ENCODE measurements at regions of chr12 and their contacts with region 1.

Region 1: GRCh38 chr12:69639400-69640016 is 28.8 kb upstream of the LRRC10 start:
- DNase-seq: no peak
- H3K4me3 ChIP-seq: no peak overlapping the region
- H3K27me3 ChIP-seq: 0 out of 2 replicates have a peak, but pooled peaks cover 1% of the 10 kb centered on the region
- CTCF ChIP-seq: peak; percentile 95

Region 2: DNA sequence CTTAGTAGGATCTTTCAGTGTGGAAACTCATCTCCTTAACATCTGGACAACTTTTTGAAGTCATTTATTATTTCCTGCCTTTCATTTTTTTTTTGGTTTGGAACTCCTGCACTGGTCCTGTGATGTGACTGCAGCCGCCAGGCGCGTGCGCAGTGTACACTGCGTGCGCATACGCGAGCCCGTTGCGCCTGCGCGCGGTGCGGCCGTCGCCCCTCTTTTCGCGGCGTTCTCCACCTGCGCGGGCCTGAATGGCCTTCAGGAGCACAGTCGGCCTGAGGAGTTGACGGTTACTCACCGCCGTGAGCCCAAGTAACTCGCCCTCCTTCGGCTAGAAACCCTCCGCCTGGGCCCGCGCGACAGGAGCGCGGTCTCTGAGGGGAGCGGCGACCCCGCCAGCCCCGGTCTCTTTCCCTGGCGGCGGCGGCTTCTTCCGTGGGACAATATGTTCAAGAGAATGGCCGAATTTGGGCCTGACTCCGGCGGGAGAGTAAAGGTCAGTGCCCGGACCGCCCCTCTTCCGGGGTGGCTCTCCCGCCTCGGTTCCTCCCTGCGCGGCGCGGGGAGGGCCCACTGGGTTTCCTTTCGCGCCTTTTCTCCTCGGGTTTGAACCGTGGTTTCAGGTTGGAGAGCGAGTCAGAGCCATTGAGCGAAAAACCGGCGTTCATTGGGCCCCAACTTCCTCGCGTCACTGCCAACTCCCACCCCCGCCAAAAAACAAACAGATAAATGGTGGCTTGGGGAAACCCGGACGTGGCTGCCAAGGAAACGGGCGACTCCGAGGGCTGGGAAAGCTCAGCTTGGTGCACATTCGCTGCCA is 279.8 kb before region 1 on chr12 and contains the start of gene YEATS4:
- CTCF ChIA-PET with region 1: interaction called, 42 read pairs
- POLR2A ChIA-PET with region 1: no interaction called
- DNase-seq: peak; percentile 46
- H3K4me3 ChIP-seq: peak within 1 kb of the TSS; percentile 93
- H3K27me3 ChIP-seq: no peaks in the 10 kb centered on the region
- CTCF ChIP-seq: no peak
- polyA plus RNA-seq, gene YEATS4: 7.8 and 9.1 TPM in 2 replicates

Region 3: DNA sequence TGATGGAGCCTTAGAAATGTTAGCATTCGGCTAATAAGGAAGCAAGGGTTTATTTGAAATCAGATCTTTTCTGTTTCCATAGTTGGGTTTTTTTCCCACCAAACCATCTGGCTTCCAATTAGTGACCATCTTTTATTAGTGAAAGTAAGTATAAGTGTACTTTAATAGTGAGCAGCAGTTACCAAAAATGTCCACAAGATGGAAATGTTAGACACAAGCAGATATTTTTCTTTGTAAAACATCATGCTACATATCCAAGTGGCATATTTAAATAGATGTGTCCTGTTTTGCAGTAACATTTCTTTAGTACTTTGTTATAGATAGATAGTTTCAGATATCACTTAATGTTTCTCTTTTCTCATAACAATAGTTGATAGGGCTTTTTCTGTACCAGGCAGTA is 251.1 kb before region 1 on chr12:
- CTCF ChIA-PET with region 1: interaction called, 27 read pairs
- POLR2A ChIA-PET with region 1: no interaction called
- DNase-seq: peak; percentile 34
- H3K4me3 ChIP-seq: no peak overlapping the region
- H3K27me3 ChIP-seq: no peaks in the 10 kb centered on the region
- CTCF ChIP-seq: peak; percentile 68

Region 4: DNA sequence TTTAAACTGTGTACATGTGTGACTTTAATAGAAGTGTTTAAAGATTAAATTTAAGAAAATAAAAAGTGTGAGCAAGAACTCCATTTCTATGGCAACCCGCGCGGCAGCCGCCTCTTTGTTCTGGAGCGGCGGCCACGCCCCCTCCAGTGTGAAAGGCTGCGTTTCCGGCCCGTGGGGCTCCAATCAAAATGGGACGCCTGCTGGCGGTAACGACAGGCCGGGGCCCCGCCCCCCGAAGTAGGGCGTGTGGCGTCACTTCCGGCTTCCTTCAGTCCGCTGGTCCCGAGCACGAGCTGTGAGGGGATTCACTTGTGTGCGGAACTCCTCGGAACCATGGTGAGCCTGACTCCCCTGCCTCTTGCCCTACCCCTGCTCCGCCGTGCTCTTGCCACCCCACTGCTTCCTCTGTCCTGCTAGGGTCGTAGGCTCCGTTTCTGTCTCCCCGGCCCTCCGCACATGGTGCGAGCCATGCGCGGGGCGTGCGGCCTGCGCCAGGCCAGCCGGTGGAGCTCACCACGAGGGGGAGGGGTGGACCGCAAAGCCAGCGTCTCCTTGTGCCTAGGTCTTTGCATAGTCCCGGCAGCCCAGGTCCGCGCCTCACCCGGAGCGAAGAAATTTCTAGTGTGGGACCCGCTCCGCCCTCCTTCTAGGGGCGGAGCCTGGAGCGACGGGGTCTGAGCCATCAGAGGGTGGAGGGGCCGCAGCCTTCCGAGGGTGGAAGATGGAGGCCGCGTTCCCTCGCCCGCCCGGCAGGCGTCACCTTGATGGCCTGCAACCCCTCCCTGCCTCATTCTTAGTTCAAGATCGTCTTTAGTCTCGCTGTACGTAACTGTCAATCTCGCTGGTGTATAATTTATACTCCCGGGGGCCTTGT is 54.1 kb before region 1 on chr12 and contains the start of gene CCT2:
- CTCF ChIA-PET with region 1: no interaction called
- POLR2A ChIA-PET with region 1: no interaction called
- DNase-seq: peak; percentile 70
- H3K4me3 ChIP-seq: peak within 1 kb of the TSS; percentile 64
- H3K27me3 ChIP-seq: no peaks in the 10 kb centered on the region
- CTCF ChIP-seq: peak; percentile 60
- polyA plus RNA-seq, gene CCT2: 225 and 228 TPM in 2 replicates

Region 5: DNA sequence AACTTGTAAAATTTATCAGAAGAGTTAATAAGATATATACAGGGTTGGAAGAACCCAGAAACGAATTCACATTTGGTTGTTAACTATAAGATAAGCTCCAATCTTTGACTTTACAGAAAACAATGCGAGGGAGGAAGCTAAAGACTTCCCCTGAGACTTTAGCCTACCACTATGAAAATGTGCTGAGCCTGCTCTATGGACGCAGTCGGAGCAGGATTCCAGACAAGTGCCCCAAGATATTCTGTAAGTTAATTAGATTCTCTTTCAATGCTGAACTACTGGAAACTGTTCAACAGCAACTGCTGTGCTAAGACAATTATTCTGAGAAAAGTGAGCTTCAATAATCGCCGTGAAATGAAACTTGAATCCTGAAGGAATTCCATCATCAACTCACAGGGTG is 20.5 kb before region 1 on chr12:
- CTCF ChIA-PET with region 1: interaction called, 33 read pairs
- POLR2A ChIA-PET with region 1: no interaction called
- DNase-seq: no peak
- H3K4me3 ChIP-seq: no peak overlapping the region
- H3K27me3 ChIP-seq: peaks cover 5% of the 10 kb centered on the region; the same call in 1 of the 2 replicates
- CTCF ChIP-seq: no peak

Region 6: DNA sequence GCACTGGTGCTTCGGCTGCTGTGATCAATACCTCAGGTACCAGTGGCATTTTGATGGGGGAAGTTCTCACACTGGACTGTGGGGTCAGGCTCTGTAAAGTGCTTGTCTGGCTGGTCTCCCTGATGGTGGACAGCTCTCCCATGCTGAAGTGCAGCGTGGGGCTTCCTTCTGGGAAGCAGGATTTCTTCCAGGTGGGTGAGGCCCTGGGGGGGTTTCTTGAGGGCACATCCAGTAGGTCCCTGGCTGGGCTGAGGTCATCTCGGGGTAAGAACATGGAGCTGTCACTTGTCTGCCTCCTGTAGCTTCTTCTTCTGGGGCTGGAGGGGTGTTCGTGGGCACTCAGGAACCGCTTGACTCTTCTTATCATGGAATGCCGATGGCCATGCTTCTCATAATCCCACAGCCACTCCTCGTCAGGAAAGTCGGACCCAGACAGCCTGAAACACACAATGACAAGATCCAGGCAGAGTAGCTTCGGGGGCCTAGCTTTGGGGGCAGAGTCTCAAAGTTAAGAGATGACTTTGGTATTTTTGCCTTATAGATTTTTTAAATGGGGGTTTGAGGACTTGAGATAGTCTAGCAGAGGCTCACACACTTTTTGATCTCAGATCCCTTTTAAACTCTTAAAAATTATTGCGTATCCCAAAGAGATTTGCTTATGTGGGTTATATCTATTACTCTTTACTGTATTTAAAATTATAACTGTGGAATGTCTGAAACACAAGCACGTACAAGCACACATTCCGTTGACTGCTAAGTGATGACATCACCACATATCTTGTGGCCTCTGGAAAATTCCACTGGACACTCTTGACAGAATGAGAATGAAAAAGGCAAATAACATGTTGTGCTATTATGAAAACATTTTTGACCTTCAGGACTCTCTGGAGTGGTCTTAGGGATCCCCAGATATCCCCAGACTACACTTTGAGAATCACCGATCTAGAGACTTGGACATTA is 16.1 kb after region 1 on chr12:
- CTCF ChIA-PET with region 1: interaction called, 14 read pairs
- POLR2A ChIA-PET with region 1: no interaction called
- DNase-seq: peak; percentile 50
- H3K4me3 ChIP-seq: no peak overlapping the region
- H3K27me3 ChIP-seq: no peaks in the 10 kb centered on the region
- CTCF ChIP-seq: no peak

Region 7: DNA sequence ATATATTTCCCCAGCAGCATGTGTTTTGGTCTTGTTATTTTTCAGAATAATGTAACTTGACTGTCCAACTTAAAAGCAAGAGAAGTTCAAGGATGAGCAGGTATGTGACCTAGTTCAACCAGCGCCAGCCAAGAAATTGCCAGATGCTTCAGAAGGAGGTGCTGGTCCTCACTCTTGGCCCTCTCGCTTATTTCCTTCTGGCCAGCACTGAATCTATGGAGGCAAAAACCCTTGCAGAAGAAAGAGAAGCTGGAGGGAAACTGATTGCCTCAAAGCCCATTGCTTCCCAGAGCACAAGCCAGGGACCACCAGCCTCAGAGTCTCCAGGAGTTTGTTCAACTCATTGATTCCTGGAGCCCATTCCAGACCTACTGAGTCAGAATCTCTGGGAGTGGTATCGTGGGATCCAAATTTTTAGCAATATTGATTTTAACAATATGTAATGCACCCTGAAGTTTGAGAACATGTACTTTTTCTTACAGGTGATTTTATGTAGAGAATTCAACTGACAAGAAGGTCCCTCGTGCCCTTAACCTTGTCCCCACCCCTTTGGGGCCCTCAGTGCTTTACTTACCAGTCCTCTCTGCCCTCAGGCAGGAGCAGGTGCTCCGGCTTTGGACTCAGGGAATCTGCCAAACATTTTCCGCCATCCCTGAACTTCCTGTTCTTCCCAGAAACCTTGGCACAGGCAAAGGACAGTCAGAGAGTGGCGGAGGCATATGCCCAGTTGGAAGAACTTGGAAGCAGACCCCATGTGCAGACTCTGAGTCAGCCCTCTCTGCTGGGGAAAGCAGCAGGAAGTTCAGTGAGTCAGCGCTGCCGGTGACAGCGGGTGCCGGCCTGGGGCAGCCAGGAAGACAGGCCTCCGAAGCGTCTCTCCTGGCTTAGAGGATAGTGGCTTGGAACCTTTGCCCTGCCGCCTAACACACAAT is 49.3 kb after region 1 on chr12:
- CTCF ChIA-PET with region 1: no interaction called
- POLR2A ChIA-PET with region 1: no interaction called
- DNase-seq: peak; percentile 70
- H3K4me3 ChIP-seq: no peak overlapping the region
- H3K27me3 ChIP-seq: no peaks in the 10 kb centered on the region
- CTCF ChIP-seq: no peak

Region 8: DNA sequence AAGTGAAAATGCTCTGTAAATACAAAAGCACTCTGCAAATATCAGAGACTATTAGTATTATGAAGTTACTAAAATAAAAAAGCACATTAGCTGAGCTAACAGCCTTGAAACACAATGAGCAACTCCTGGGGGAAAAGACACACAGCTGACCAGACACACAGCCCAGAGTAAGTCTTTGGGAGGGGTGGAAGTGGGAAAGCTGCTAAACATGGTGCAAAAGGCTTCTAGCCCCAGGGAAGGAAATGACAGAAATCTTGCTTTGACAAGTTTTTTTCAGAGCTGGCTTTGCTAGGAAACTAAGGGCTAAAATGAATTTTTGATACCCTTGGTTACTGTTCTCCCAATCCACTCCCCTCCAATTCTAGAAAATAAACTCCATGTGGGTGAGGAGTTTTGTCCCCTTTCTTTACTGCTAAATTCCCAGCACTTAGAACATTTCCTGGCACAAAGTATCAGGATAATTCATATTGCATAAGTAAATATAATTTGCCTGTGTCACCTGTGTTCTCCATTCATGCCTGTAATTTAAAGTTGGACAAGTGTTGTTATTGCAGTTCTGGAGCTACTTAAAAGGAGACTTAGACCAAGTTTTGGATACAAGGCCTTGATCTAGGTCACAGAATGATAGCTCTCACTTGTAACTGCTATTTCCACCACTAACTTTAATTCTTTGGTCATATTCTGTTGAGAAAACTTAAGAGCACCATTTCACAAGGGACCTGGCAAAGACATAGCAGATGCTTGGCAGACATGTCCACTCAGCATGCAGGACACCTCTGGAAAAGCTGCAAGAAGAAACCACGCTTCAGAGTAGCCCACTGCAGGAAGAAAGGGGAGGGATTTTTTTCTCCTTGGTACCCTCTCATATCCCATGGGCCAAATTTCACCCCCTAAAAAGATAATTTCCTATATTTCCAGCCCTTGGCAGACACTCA is 80.1 kb after region 1 on chr12:
- CTCF ChIA-PET with region 1: no interaction called
- POLR2A ChIA-PET with region 1: no interaction called
- DNase-seq: no peak
- H3K4me3 ChIP-seq: no peak overlapping the region
- H3K27me3 ChIP-seq: peaks cover 3% of the 10 kb centered on the region; the same call in 1 of the 2 replicates
- CTCF ChIP-seq: no peak